Upper lobe of right lung (tissue), 1 donor: ENCODE measurements at regions of chr15 and their contacts with region 1.

Region 1: DNA sequence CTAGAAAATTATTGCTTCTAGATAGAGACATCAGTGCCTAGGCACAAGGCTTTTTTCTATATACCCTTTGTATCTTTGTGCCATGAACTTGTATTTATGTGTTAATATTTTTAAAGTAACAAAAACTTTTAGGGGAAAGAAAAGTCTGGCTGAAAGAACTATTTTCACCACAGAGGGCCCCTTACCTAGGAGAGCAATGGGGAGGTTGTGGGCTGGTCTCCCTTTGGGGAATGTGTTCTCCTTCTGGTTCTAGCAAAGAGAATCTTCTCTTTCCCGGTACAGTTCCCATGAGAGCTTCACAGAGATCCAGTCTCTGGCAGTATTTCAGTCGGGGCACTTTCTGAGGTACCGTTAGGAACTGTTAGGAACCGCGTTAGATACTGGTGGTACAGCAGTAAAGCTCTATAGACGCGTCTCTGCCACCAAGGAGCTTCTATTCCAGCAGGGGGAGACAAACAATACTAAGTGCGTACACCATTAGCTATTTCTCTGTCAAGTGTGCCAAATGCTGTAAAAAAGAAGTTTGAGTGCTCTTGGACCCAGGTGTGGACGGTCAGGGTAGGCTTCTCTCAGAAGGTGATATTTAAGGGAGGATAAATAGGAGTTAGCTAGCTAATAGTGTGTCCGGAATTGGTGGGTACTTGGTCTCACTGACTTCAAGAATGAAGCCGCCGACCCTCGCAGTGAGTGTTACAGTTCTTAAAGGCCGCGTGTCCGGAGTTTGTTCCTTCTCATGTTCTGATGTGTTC is 4.6 kb upstream of the EPB42 start:
- DNase-seq: no peak
- ATAC-seq: peak; percentile 89
- H3K4me3 ChIP-seq: no peak overlapping the region
- H3K27ac ChIP-seq: no peak overlapping the region
- H3K4me1 ChIP-seq: no peaks in the 10 kb centered on the region
- H3K27me3 ChIP-seq: no peaks in the 10 kb centered on the region
- CTCF ChIP-seq: peak; percentile 74

Region 2: DNA sequence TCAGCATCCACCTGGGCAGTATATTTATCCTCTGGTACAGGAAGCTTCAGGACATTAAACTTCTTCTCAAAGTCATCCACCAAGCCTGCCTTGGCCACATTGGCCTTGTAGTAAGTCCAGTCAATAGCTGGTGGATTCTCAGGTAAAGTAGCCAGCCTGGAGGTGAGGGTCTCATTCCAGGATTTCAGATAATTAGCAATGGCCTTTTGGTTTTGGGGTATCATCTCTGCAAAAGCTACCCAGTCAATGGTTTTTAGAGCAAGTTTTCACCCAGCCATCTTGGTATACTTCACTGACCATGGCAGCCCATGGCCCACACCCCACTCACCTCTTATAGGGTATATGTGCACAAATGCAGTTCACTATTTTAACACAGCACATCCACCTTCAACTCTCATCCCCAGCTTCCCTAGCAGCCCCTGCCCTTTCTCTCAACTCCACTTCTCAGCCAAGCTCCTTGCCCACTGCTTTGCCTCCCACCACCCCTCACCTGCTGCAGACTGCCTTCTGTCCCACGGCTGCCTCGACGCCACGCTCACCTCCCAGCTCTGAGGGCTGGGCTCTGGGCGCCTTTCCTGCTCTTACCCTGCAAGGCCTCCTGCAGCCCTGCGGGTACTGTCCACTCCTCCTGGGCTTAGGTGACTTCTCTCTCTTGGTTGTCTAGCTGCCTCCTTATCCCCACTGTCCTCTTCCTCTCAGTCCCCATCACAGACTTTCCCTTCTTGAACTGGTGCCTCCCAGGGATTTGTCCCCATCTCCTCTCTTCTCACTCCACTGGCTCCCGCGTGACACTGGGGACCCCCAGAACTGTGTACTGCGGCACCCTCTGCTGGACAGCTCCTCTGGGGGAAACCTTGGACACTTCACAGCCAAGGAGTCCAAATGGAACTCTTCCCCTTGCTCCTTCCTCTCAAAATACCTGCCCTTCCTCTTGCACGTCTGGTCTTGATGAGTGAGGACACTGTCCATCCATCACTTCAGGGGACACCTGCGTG is 43.0 kb after region 1 on chr15:
- intact Hi-C with region 1: no loop called
- DNase-seq: no peak
- ATAC-seq: peak; percentile 24
- H3K4me3 ChIP-seq: no peak overlapping the region
- H3K27ac ChIP-seq: no peak overlapping the region
- H3K4me1 ChIP-seq: no peaks in the 10 kb centered on the region
- H3K27me3 ChIP-seq: peaks cover 4% of the 10 kb centered on the region
- CTCF ChIP-seq: peak; percentile 29

Region 3: DNA sequence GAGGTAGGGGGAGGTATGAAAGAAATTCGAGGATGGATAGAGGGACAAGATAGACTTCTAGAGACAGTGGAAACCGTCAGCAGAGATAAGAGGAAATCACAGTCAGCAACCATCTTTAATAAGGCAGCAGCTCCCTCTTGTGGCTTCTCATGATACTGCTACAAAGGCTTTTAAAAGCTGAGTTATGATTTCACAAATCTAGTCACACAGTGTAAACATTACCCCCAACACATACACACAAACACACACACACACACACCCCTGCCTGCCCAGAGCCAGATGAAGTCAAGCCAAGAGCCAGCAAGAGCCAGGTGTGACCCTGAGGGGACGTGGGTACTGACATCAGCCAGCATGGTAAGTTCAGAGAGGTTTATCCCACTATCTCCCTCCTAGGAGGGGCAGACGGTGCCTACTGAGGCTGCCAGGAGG is 60.2 kb after region 1 on chr15:
- intact Hi-C with region 1: loop called (anchors 2 kb)
- DNase-seq: no peak
- ATAC-seq: peak; percentile 89
- H3K4me3 ChIP-seq: no peak overlapping the region
- H3K27ac ChIP-seq: no peak overlapping the region
- H3K4me1 ChIP-seq: no peaks in the 10 kb centered on the region
- H3K27me3 ChIP-seq: no peaks in the 10 kb centered on the region
- CTCF ChIP-seq: peak; percentile 86